ENCODE measurements at regions of chr3 and their contacts with region 1.

Region 1: DNA sequence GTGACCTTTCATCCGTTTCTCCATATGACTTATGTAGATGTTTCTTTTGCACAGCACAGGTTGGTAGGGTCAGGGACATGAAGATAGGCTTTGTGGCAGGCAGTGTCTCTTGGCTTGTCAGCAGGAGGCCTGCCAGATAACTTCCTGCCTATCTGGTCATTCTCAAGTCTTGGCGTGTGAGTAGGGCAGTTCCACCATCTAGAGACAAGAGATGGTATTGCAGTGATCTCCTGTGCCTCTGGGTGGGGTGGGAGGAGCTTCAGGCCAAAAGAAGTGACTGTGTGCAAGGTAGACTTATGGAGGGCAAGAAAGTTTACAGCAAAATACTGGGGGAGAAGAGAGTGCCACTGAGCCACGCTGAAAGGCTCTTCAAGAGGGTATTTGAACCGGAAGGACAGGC is 11.0 kb downstream of the TEX264 start:
- DNase-seq: peak; percentile 89
- CTCF ChIP-seq: peak; percentile 78

Region 2: GRCh38 chr3:50696276-50696675 is 985.8 kb before region 1 on chr3:
- CTCF ChIA-PET with region 1: no interaction called
- POLR2A ChIA-PET with region 1: no interaction called
- DNase-seq: no peak
- CTCF ChIP-seq: no peak

Region 3: DNA sequence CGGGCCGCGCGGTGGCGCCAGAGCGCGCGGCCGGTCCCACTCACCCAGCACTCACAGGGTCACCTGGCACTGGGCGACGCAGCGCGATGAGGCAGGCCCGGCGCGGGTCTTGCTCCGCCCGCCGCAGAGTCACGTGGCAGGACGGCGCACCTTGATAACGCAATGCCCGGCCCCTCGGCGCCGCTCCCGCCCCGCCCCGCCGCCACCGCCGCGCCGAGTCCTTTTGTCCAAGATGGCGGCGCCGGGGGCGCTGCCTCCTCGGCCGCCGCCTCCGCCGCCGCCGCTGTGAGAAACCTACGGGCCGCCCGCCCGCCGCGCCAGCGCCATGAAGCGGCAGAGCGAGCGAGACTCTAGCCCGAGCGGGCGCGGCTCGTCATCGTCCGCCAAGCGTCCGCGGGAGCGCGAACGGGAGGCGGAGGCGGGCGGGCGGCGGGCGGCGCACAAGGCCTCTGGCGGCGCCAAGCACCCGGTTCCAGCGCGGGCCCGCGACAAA is 291.0 kb before region 1 on chr3 and contains the start of gene RBM15B:
- CTCF ChIA-PET with region 1: interaction called, 71 read pairs
- POLR2A ChIA-PET with region 1: no interaction called
- DNase-seq: peak; percentile 97
- CTCF ChIP-seq: peak; percentile 95

Region 4: DNA sequence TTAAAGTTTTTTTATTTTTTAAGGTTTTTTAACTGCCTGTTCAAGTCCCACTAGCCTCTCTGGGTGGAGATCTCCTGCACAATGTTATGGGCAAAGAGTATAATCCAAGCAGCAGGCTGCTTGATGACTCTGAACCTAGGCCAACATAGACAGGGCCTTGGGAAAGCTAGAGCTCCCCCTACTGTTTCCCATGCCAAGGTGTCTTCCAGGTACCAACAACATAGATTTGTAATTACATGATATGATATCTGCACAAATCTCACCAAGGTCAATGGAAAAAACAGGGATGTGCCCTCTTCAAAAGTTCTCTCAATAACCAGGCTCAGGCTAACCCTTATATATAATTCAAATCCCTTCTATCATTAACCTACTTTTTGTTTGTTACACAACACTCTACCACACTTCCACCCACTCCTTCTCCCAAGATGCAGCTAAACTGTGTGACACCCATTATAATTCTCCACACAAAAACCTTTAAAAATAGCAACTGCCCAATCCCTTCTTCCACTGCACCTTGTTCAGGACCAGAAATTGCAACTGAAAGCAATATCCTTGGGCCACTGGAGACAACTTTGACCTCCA is 247.2 kb before region 1 on chr3:
- CTCF ChIA-PET with region 1: interaction called, 12 read pairs
- POLR2A ChIA-PET with region 1: no interaction called
- DNase-seq: peak; percentile 57
- CTCF ChIP-seq: peak; percentile 55

Region 5: DNA sequence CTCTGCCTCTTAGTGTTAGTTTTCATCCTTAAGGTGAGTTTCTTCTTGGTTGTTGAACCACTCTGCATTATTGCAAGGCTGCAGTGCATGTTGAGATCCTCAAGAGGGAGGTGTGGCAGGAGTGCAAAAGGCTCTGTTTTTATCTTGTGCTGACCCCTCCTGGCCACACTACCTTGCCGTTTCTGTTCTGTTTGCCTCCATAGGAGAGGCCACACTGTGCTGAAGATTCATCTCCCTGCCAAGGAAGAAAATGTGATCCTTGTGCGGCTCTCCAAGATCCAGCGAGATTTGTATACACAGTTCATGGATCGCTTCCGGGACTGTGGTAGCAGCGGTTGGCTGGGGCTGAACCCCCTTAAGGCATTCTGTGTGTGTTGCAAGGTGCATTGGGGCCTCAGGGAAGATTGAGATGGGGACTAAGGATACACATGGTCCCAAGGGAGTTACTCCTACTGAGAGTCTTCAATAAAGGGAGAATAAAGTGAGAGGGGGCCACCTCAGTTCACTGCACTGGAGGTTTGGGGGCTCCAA is 44.1 kb before region 1 on chr3:
- CTCF ChIA-PET with region 1: interaction called, 14 read pairs
- POLR2A ChIA-PET with region 1: no interaction called
- DNase-seq: peak; percentile 67
- CTCF ChIP-seq: peak; percentile 80

Region 6: DNA sequence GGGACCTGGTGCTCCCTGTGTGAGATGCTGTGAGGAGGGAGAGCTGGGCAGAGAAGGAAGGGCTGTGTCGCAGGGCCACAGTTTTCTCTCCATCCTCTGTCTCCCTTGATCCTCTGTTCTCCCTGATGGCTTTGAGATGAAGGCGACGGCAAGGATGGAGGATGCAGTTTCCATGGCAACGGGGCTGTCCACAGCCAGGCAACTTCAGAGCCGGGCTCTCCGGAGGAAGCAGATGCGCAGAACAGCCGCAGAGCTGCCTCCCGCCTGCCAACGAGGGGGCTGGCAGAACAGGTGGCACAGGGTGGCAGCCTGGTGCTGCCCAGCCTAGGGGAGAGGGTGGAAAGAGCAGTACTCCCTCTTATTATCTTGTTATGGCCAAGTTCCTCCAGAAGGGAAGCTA is 14.9 kb after region 1 on chr3:
- CTCF ChIA-PET with region 1: interaction called, 24 read pairs
- POLR2A ChIA-PET with region 1: no interaction called
- DNase-seq: no peak
- CTCF ChIP-seq: no peak

Measured in GM10248 (cell line).